ENCODE measurements at regions of chr9 and their contacts with region 1.

Region 1: DNA sequence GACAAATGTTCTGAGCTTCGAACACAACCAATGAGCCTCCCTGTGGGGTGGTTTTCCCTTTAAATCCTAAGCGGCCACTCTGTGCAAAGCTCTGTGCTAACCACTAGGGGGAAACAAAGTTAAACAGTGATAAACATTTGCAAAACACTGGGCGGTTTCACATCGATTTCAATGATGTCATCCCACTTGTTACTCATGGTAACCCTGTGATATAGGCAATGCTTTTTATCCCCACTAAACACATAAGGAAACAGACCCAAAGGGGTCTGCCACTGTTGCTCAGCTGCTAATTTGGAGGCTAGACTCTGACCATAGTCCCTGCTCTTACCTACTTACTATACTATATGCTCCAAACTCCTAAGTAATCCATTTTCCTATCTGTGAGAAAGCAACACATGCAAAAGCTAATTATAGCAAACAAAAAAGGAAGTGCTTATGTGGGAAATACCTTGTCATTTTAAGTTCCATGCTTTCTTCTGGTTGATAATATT is 57.3 kb downstream of the PTPN3 start:
- DNase-seq: peak; percentile 67
- H3K4me3 Mint-ChIP-seq: no peak overlapping the region
- H3K27ac Mint-ChIP-seq: no peak overlapping the region
- H3K4me1 Mint-ChIP-seq: peaks cover 16% of the 10 kb centered on the region
- H3K27me3 Mint-ChIP-seq: peaks cover 52% of the 10 kb centered on the region

Region 2: GRCh38 chr9:109411798-109412352 is 29.0 kb before region 1 on chr9:
- CTCF ChIA-PET with region 1: interaction called, 10 read pairs
- DNase-seq: peak; percentile 30
- H3K4me3 Mint-ChIP-seq: no peak overlapping the region
- H3K27ac Mint-ChIP-seq: no peak overlapping the region
- H3K4me1 Mint-ChIP-seq: peaks cover 8% of the 10 kb centered on the region
- H3K27me3 Mint-ChIP-seq: peaks cover 31% of the 10 kb centered on the region

Region 3: GRCh38 chr9:109428854-109429253 is 12.0 kb before region 1 on chr9:
- CTCF ChIA-PET with region 1: interaction called, 13 read pairs
- DNase-seq: no peak
- H3K4me3 Mint-ChIP-seq: no peak overlapping the region
- H3K27ac Mint-ChIP-seq: no peak overlapping the region
- H3K4me1 Mint-ChIP-seq: no peaks in the 10 kb centered on the region
- H3K27me3 Mint-ChIP-seq: peaks cover 5% of the 10 kb centered on the region

Region 4: GRCh38 chr9:109469646-109470358 is 29.0 kb after region 1 on chr9:
- CTCF ChIA-PET with region 1: interaction called, 189 read pairs
- DNase-seq: peak; percentile 77
- H3K4me3 Mint-ChIP-seq: no peak overlapping the region
- H3K27ac Mint-ChIP-seq: no peak overlapping the region
- H3K4me1 Mint-ChIP-seq: no peaks in the 10 kb centered on the region
- H3K27me3 Mint-ChIP-seq: peaks cover 17% of the 10 kb centered on the region

Region 5: DNA sequence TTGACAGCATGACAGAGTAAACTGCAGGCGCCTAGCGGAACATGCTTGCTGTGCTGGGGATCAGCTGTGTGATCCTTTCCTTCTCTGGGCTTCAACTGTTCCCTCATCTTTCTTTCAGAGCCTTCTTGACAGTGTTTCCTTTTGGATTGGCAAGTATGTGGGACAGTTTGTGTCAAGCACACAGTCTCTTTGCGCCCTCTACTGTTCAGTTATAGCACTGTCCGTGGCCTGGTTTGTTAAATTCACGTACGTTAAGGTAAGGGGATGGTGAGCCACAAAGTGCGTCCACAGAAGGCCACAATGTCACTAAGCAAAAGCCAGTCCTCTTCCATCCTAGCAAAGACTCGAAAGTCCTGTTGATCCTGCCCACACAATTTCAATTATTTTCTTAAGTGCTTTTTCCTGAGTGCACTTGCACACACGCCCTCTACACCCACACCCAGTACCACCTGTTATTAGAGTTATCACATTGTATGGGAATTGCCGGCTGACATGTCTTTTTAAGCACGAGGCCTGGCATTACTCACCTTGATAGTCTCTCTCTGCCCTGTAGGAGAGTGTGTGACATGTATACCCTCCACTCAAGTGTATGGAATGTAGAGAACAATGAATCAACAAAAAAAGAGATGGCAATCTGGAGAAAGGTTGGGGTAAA is 79.8 kb after region 1 on chr9:
- CTCF ChIA-PET with region 1: interaction called, 22 read pairs
- DNase-seq: peak; percentile 59
- H3K4me3 Mint-ChIP-seq: no peak overlapping the region
- H3K27ac Mint-ChIP-seq: no peak overlapping the region
- H3K4me1 Mint-ChIP-seq: no peaks in the 10 kb centered on the region
- H3K27me3 Mint-ChIP-seq: peaks cover 12% of the 10 kb centered on the region

Measured in activated naive CD4-positive, alpha-beta T cell treated with anti-CD3 and anti-CD28 coated beads, Interleukin-2, amount 10 ng/mL, durations not matched to agents 7 days and 5 days (primary cell).